ENCODE measurements at regions of chr2 and their contacts with region 1.

Region 1: GRCh38 chr2:38057651-38058410 is 18.1 kb downstream of the CYP1B1 start:
- DNase-seq: no peak
- ATAC-seq: peak in 1 of 4 donors; percentile 74
- H3K4me3 ChIP-seq: no peak overlapping the region
- H3K27ac ChIP-seq: no peak overlapping the region
- H3K4me1 ChIP-seq: no peaks in the 10 kb centered on the region
- H3K27me3 ChIP-seq: no peaks in the 10 kb centered on the region
- CTCF ChIP-seq: no peak

Region 2: GRCh38 chr2:37993143-37993542 is 64.7 kb before region 1 on chr2:
- intact Hi-C with region 1: loop called in 1 of 3 experiments (anchors 10 kb)
- DNase-seq: no peak
- ATAC-seq: no peak
- H3K4me3 ChIP-seq: no peak overlapping the region
- H3K27ac ChIP-seq: peak overlapping the region in 2 of 4 donors; percentile 31 to 42
- H3K4me1 ChIP-seq: no peaks in the 10 kb centered on the region
- H3K27me3 ChIP-seq: no peaks in the 10 kb centered on the region
- CTCF ChIP-seq: no peak

Measured in pancreas (tissue), 10 donors.